ENCODE measurements at regions of chr7 and their contacts with region 1.

Region 1: DNA sequence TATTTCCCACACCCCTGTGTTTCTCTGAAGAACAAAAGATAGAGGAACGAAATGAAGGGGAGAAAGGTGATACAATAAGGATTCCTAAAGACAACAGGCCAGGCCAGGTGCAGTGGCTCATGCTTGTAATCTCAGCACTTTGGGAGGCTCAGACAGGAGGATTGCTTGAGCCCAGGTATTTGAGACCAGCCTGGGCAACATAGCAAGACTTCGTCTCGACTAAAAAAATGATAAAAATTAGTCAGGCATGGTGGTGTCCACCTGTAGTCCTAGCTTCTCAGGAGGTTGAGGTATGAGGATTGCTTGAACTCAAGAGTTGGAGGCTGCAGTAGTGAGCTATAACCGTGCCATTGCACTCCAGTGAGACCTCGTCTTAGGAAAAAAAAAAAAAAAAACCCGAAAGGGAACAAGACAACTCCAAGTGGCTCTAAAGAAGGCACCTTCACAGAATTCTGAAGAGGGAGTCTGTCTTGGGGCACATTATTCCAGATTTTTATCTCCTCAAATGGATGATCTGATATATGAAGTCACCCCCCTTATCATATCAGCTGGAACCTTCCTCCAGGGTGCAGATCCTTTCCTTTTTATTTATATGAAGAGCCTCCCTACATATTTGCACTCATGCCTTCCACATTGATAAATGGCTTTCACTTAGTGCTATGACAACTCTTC is 41.5 kb upstream of the FAM3C start:
- DNase-seq: no peak
- H3K4me3 ChIP-seq: peak overlapping the region in 1 of 2 donors; percentile 38
- H3K4me3 Mint-ChIP-seq: peak overlapping the region; percentile 69 to 88 (median 78)
- H3K27ac ChIP-seq: peak overlapping the region; percentile 30
- H3K27ac Mint-ChIP-seq: peak overlapping the region; percentile 73 to 95 (median 93)
- H3K4me1 ChIP-seq: peaks cover 29% of the 10 kb centered on the region
- H3K4me1 Mint-ChIP-seq: peaks cover 21 to 46% (median 37%) of the 10 kb centered on the region in 4 donors
- H3K27me3 ChIP-seq: no peaks in the 10 kb centered on the region
- H3K27me3 Mint-ChIP-seq: no peaks in the 10 kb centered on the region

Region 2: DNA sequence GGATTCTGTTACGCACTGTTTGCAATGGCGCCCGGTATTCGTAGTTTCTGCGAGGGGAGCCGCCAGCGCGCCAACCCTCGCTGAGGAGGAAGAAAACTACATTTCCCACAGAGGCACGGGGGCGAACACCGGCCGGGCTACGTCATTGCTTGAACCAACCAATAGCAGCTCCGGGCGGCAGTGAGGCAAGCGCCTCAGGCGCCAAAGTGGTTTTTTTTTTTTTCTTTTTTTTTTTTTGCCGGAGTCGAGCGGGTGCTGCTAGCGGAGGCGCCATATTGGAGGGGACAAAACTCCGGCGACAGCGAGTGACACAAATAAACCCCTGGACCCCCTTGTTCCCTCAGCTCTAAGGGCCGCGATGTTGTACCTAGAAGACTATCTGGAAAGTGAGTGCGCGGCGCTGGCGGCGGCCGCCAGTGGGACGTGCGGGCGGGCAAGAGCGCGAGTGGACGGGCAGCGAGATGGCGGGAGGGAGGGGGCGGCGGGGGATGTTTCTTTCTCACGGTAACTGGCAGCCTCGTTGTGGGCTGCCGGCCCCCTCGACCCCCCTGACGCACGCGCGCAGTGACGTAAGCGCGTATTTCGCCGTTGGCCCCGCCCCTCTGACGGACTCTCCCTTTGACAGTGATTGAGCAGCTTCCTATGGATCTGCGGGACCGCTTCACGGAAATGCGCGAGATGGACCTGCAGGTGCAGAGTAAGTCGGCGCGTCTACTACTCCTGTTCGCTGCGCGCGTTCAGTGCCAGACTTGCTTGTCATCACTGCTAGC is 486.9 kb before region 1 on chr7 and contains the start of gene ING3:
- CTCF ChIA-PET with region 1: no interaction called
- POLR2A ChIA-PET with region 1: interaction called, 3 read pairs
- intact Hi-C with region 1: loop called (anchors 1 kb)
- DNase-seq: peak; percentile 98 to 99 (median 98)
- H3K4me3 ChIP-seq: peak within 1 kb of the TSS; percentile 80 to 93
- H3K4me3 Mint-ChIP-seq: peak within 1 kb of the TSS; percentile 91 to 99 (median 96)
- H3K27ac ChIP-seq: peak within 1 kb of the TSS; percentile 99
- H3K27ac Mint-ChIP-seq: peak within 1 kb of the TSS; percentile 98 to 99 (median 99)
- H3K4me1 ChIP-seq: peaks cover 27% of the 10 kb centered on the region
- H3K4me1 Mint-ChIP-seq: peaks cover 13 to 33% (median 19%) of the 10 kb centered on the region in 4 donors
- H3K27me3 ChIP-seq: no peaks in the 10 kb centered on the region
- H3K27me3 Mint-ChIP-seq: peaks cover 7 to 14% of the 10 kb centered on the region in 2 donors
- total RNA-seq, gene ING3: 24.1 to 26.5 TPM

Region 3: GRCh38 chr7:121099572-121099971 is 338.0 kb before region 1 on chr7:
- CTCF ChIA-PET with region 1: no interaction called
- POLR2A ChIA-PET with region 1: no interaction called
- intact Hi-C with region 1: no loop called
- DNase-seq: no peak
- H3K4me3 ChIP-seq: no peak overlapping the region
- H3K4me3 Mint-ChIP-seq: no peak overlapping the region
- H3K27ac ChIP-seq: no peak overlapping the region
- H3K27ac Mint-ChIP-seq: no peak overlapping the region
- H3K4me1 ChIP-seq: no peaks in the 10 kb centered on the region
- H3K4me1 Mint-ChIP-seq: no peaks in the 10 kb centered on the region
- H3K27me3 ChIP-seq: no peaks in the 10 kb centered on the region
- H3K27me3 Mint-ChIP-seq: peaks cover 3% of the 10 kb centered on the region in 2 donors

Region 4: GRCh38 chr7:121366852-121367431 is 70.7 kb before region 1 on chr7:
- CTCF ChIA-PET with region 1: interaction called, 35 read pairs
- POLR2A ChIA-PET with region 1: interaction called, 3 read pairs
- intact Hi-C with region 1: loop called (anchors 1 kb)
- DNase-seq: peak in 4 of 5 donors; percentile 48 to 56 (median 56)
- H3K4me3 ChIP-seq: no peak overlapping the region
- H3K4me3 Mint-ChIP-seq: no peak overlapping the region
- H3K27ac ChIP-seq: no peak overlapping the region
- H3K27ac Mint-ChIP-seq: peak overlapping the region in 1 of 7 donors; percentile 59
- H3K4me1 ChIP-seq: peaks cover 6% of the 10 kb centered on the region
- H3K4me1 Mint-ChIP-seq: peaks cover 5 to 11% (median 7%) of the 10 kb centered on the region in 4 donors
- H3K27me3 ChIP-seq: no peaks in the 10 kb centered on the region
- H3K27me3 Mint-ChIP-seq: no peaks in the 10 kb centered on the region

Region 5: GRCh38 chr7:121372376-121373010 is 65.1 kb before region 1 on chr7:
- CTCF ChIA-PET with region 1: interaction called, 35 read pairs
- POLR2A ChIA-PET with region 1: interaction called, 3 read pairs
- intact Hi-C with region 1: loop called (anchors 1 kb)
- DNase-seq: no peak
- H3K4me3 ChIP-seq: no peak overlapping the region
- H3K4me3 Mint-ChIP-seq: peak overlapping the region in 1 of 8 donors; percentile 1
- H3K27ac ChIP-seq: no peak overlapping the region
- H3K27ac Mint-ChIP-seq: peak overlapping the region; percentile 3 to 70 (median 36)
- H3K4me1 ChIP-seq: peaks cover 20% of the 10 kb centered on the region
- H3K4me1 Mint-ChIP-seq: peaks cover 17 to 25% (median 20%) of the 10 kb centered on the region in 4 donors
- H3K27me3 ChIP-seq: no peaks in the 10 kb centered on the region
- H3K27me3 Mint-ChIP-seq: no peaks in the 10 kb centered on the region

Region 6: GRCh38 chr7:121485467-121486243 is 48.1 kb after region 1 on chr7:
- CTCF ChIA-PET with region 1: no interaction called
- POLR2A ChIA-PET with region 1: no interaction called
- intact Hi-C with region 1: loop called (anchors 2 kb)
- DNase-seq: no peak
- H3K4me3 ChIP-seq: no peak overlapping the region
- H3K4me3 Mint-ChIP-seq: no peak overlapping the region
- H3K27ac ChIP-seq: no peak overlapping the region
- H3K27ac Mint-ChIP-seq: no peak overlapping the region
- H3K4me1 ChIP-seq: no peaks in the 10 kb centered on the region
- H3K4me1 Mint-ChIP-seq: peaks cover 0 to 9% (median 7%) of the 10 kb centered on the region in 4 donors
- H3K27me3 ChIP-seq: no peaks in the 10 kb centered on the region
- H3K27me3 Mint-ChIP-seq: no peaks in the 10 kb centered on the region

Region 7: DNA sequence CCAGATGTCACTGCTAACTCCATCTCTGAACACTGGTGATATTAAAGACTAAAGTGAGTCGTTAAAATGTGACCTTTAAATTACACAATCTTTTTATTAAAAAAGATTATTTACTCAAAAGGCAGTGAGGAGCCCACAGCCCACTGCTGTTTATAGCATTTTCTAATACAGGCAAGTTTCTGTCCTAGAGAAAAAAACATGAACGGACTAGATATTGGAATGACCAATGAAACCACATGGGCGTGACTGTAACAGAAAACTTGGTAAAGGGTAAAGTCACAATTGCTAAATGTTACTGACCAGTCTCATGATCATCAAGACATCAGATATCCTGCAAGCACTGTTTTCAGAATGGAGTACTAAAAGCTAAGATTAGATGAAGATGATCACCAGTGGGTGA is 788.3 kb after region 1 on chr7:
- CTCF ChIA-PET with region 1: no interaction called
- POLR2A ChIA-PET with region 1: no interaction called
- intact Hi-C with region 1: no loop called
- DNase-seq: no peak
- H3K4me3 ChIP-seq: no peak overlapping the region
- H3K4me3 Mint-ChIP-seq: no peak overlapping the region
- H3K27ac ChIP-seq: no peak overlapping the region
- H3K27ac Mint-ChIP-seq: no peak overlapping the region
- H3K4me1 ChIP-seq: no peaks in the 10 kb centered on the region
- H3K4me1 Mint-ChIP-seq: no peaks in the 10 kb centered on the region
- H3K27me3 ChIP-seq: no peaks in the 10 kb centered on the region
- H3K27me3 Mint-ChIP-seq: no peaks in the 10 kb centered on the region